ENCODE measurements at regions of chr6 and their contacts with region 1.

Region 1: DNA sequence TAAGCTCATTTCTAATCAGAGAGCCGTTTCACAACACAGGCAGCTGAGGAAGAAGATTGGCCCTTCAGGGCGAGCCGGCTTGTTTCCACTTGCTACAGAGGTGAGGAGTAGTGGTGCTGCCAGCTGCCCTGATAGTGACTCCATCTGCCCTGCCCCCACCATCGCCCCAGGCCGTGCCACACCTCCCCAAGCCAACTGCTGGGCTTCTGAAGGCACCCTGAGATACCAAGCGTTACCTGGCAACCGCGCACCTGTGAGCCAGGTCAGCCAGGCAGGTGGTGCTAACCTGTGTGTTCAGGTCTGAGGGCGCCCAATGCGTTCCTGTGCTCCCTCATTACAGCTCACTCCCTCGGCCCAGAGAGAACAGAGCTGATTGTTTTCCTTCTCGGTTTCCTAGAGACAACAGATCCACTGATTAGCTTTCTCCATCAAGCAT is 299.1 kb upstream of the ID4 start:
- DNase-seq: peak; percentile 57
- ATAC-seq: peak; percentile 23
- H3K4me3 ChIP-seq: no peak overlapping the region
- H3K27ac ChIP-seq: no peak overlapping the region
- H3K4me1 ChIP-seq: peaks cover 22% of the 10 kb centered on the region
- H3K27me3 ChIP-seq: no peaks in the 10 kb centered on the region
- CTCF ChIP-seq: no peak

Region 2: DNA sequence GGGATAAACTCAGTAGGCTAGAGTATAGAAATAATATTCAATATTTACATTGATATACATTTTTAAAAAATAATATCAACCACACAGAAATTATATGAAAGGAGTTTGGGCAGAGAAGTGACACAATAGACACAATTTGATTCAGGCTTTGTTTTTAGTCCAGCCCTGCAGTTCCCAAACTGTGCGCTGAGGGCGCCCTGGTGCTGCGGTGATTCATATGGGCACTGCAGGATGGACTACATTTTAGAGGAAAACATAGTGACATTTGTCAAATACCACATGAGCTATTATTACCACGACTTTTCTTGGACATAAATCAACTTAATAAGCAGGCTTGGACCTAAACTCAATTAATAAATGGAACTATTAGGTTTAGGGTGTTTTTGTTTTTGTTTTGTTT is 65.2 kb before region 1 on chr6:
- CTCF ChIA-PET with region 1: no interaction called
- POLR2A ChIA-PET with region 1: no interaction called
- intact Hi-C with region 1: loop called (anchors 5 kb)
- DNase-seq: peak; percentile 49
- ATAC-seq: no peak
- H3K4me3 ChIP-seq: no peak overlapping the region
- H3K27ac ChIP-seq: peak overlapping the region; percentile 57; the same call in 1 of the 2 replicates
- H3K4me1 ChIP-seq: peaks cover 23% of the 10 kb centered on the region
- H3K27me3 ChIP-seq: no peaks in the 10 kb centered on the region
- CTCF ChIP-seq: peak; percentile 51

Region 3: GRCh38 chr6:19682859-19683258 is 144.8 kb after region 1 on chr6:
- CTCF ChIA-PET with region 1: no interaction called
- POLR2A ChIA-PET with region 1: no interaction called
- intact Hi-C with region 1: no loop called
- DNase-seq: no peak
- ATAC-seq: no peak
- H3K4me3 ChIP-seq: no peak overlapping the region
- H3K27ac ChIP-seq: no peak overlapping the region
- H3K4me1 ChIP-seq: no peaks in the 10 kb centered on the region
- H3K27me3 ChIP-seq: no peaks in the 10 kb centered on the region
- CTCF ChIP-seq: no peak